PC-3 (cell line): ENCODE measurements at regions of chr10 and their contacts with region 1.

Region 1: GRCh38 chr10:13776861-13777311 is 190.1 kb downstream of the PRPF18 start:
- DNase-seq: peak; percentile 57
- ATAC-seq: peak; percentile 81
- H3K4me3 ChIP-seq: no peak overlapping the region
- H3K27ac ChIP-seq: peak overlapping the region; percentile 91
- H3K4me1 ChIP-seq: peaks cover 41% of the 10 kb centered on the region
- H3K27me3 ChIP-seq: no peaks in the 10 kb centered on the region
- CTCF ChIP-seq: no peak

Region 2: GRCh38 chr10:13371897-13372470 is 404.9 kb before region 1 on chr10:
- CTCF ChIA-PET with region 1: no interaction called
- POLR2A ChIA-PET with region 1: no interaction called
- intact Hi-C with region 1: loop called (anchors 5 kb)
- DNase-seq: peak; percentile 79
- ATAC-seq: peak; percentile 97
- H3K4me3 ChIP-seq: no peak overlapping the region
- H3K27ac ChIP-seq: no peak overlapping the region
- H3K4me1 ChIP-seq: no peaks in the 10 kb centered on the region
- H3K27me3 ChIP-seq: no peaks in the 10 kb centered on the region
- CTCF ChIP-seq: peak; percentile 80

Region 3: DNA sequence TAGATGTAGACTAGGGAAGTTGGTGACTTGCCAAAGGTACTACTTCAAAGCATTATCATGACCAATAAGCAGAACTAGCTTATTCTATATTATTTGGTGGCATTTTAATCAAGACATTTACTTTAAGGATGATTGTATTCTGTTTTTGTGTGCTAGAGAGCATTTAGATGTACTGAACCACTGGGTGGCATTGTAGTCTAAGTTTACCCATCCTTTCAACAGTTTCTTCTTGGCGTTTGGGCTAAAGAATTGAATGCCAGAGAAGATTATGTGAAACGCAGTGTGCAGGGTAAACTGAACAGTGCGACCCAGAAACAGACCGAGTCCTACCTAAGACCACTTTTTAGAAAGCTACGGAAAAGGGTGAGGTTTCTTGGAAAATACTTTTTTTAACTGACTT is 163.4 kb before region 1 on chr10:
- CTCF ChIA-PET with region 1: no interaction called
- POLR2A ChIA-PET with region 1: no interaction called
- intact Hi-C with region 1: loop called (anchors 1 kb)
- DNase-seq: peak; percentile 7
- ATAC-seq: peak; percentile 27; the same call in 1 of the 2 replicates
- H3K4me3 ChIP-seq: no peak overlapping the region
- H3K27ac ChIP-seq: no peak overlapping the region
- H3K4me1 ChIP-seq: no peaks in the 10 kb centered on the region
- H3K27me3 ChIP-seq: no peaks in the 10 kb centered on the region
- CTCF ChIP-seq: peak; percentile 40; the same call in 1 of the 2 replicates

Region 4: DNA sequence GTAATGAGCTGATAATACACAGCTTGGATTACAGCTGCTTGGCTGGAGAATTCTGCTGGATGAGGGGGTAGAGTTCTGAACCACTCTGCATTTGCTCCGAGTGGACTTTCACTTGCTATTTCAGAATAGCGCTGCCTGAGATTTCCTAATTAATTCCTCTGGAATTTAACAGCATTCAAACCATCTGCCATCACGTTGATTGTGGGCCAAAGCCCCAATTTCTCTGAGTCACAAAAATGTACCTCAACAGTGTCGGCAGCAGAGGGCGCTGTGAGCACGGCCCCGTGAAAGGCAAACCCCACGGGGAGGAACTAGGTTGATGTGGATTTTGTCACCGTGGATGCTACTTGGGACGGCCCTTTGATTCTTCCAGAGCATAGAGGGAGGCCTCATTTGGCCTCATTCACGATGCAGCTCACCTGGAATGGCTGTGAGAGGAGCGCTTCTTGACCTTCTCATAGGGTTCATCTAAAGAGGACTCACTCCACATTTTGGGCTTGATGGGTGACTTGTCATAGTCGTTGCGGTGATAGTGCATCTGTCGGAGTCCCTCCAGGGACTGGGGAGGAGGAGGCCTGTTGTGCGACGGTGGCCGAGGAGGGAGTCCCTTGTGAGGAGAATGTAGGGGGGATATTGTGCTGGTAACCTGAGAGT is 116.9 kb before region 1 on chr10:
- CTCF ChIA-PET with region 1: interaction called, 9 read pairs
- POLR2A ChIA-PET with region 1: no interaction called
- intact Hi-C with region 1: loop called (anchors 1 kb)
- DNase-seq: peak; percentile 27
- ATAC-seq: no peak; the same call in 1 of the 2 replicates
- H3K4me3 ChIP-seq: no peak overlapping the region
- H3K27ac ChIP-seq: no peak overlapping the region
- H3K4me1 ChIP-seq: no peaks in the 10 kb centered on the region
- H3K27me3 ChIP-seq: no peaks in the 10 kb centered on the region
- CTCF ChIP-seq: peak; percentile 81

Region 5: DNA sequence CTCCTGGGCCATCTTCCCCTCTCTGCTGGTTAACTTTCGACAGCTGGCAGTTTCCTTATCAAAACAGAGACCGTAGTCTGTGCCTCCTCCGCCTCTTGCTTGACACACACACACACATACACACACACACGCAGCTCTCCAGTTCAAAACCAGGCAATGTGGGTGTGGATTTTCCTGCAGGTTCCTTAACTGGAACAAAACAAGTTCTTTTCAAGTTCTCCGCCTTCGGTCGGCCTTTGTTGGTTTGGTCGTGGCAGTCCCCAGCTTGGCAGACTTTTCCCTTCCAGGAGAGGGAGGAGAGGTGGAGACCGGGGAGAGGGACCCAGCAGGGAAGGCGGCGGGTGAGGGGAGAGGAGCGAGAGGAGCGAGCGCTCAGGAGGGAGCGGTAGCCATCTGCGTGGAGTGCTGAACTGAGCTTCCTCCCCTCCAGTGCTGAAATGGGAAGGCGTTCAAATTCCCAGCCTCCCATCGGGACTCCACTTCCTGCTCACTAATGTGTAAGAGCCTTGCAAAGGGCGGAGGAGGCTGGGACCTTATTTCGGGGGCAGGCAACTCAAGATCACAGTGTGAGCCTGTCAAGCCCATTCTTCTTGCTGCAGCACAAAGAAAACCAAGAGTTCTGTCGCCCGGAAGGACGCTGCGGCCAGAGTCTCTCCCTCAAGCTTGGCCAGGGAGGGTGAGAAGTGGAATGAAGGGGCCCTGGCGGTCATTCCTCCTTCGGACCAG is 69.6 kb before region 1 on chr10:
- CTCF ChIA-PET with region 1: no interaction called
- POLR2A ChIA-PET with region 1: no interaction called
- intact Hi-C with region 1: loop called (anchors 5 kb)
- DNase-seq: peak; percentile 49
- ATAC-seq: peak; percentile 77
- H3K4me3 ChIP-seq: peak overlapping the region; percentile 54
- H3K27ac ChIP-seq: no peak overlapping the region
- H3K4me1 ChIP-seq: peaks cover 13% of the 10 kb centered on the region
- H3K27me3 ChIP-seq: no peaks in the 10 kb centered on the region
- CTCF ChIP-seq: no peak